Tibial artery (tissue), 4 donors: ENCODE measurements at regions of chr6 and their contacts with region 1.

Region 1: GRCh38 chr6:100346828-100347227 is 117.9 kb downstream of the SIM1 start:
- DNase-seq: no peak
- H3K4me3 ChIP-seq: no peak overlapping the region
- H3K27ac ChIP-seq: peak overlapping the region; percentile 31 to 40
- H3K4me1 ChIP-seq: peaks cover 0 to 49% (median 5%) of the 10 kb centered on the region in 4 donors
- H3K27me3 ChIP-seq: no peaks in the 10 kb centered on the region
- CTCF ChIP-seq: no peak

Region 2: DNA sequence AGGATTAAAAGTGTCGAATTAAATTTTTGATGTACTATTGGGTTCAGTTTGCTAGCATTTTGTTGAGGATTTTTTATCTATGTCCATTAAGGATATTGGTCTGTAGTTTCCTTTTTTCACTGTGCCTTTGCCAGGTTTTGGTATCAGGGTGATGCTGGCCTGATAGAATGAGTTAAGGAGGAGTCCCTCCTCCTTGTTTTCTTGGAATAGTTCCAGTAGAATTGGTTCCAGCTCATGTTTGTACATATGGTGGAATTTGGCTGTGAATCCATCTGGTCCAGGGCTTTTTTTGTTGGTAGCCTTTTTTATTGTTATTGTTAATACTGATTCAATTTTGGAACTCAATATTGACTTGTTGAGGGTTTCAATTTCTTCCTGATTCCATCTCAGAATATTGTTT is 23.9 kb before region 1 on chr6:
- intact Hi-C with region 1: loop called (anchors 1 kb)
- DNase-seq: no peak
- H3K4me3 ChIP-seq: no peak overlapping the region
- H3K27ac ChIP-seq: no peak overlapping the region
- H3K4me1 ChIP-seq: no peaks in the 10 kb centered on the region
- H3K27me3 ChIP-seq: no peaks in the 10 kb centered on the region
- CTCF ChIP-seq: no peak

Region 3: DNA sequence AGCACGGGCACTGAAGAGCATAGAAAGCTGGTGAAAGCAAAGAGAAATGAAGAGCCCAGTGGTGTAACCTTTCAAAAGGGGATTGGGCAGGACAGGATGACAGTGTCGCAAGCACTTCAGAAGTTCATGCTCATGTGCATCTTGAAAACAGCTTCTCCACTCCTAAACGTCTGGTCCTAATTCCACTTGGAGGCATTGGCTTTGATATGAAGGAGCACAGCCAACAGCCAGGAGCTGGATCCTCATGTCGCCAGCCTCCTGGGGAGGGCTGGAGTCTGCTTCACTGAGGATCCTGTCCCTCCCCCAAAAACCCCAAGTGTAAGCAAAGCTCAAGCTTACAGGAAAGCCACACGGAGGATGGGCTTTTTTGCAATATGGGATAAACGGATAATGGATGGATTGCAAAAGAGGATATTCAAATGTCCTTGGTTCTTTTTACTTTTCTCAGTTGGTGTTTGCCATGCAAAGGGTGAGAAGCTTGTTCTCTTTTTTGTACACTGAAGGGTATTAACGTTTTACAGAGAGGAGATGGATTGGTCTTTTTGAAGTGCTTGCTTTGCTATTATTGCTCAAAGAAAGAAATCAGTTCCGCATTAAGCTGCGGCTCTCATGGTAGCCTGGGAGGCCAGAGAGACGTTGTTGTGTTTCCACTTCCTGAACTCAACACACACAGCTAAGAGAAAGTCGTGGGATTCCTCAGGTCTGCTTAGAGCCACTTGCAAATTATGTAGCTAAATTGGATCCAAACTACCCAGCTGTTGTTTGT is 25.7 kb after region 1 on chr6:
- intact Hi-C with region 1: loop called (anchors 1 kb)
- DNase-seq: no peak
- H3K4me3 ChIP-seq: no peak overlapping the region
- H3K27ac ChIP-seq: no peak overlapping the region
- H3K4me1 ChIP-seq: no peaks in the 10 kb centered on the region
- H3K27me3 ChIP-seq: no peaks in the 10 kb centered on the region
- CTCF ChIP-seq: no peak